HEK293 (cell line): ENCODE measurements at regions of chr17 and their contacts with region 1.

Region 1: GRCh38 chr17:41811549-41812380 is at the start of gene P3H4:
- H3K4me3 ChIP-seq: peak within 1 kb of the TSS; percentile 73
- H3K27ac ChIP-seq: peak within 1 kb of the TSS; percentile 89
- H3K4me1 ChIP-seq: 0 out of 2 replicates have a peak, but pooled peaks cover 8% of the 10 kb centered on the region
- CTCF ChIP-seq: peak; percentile 78

Region 2: DNA sequence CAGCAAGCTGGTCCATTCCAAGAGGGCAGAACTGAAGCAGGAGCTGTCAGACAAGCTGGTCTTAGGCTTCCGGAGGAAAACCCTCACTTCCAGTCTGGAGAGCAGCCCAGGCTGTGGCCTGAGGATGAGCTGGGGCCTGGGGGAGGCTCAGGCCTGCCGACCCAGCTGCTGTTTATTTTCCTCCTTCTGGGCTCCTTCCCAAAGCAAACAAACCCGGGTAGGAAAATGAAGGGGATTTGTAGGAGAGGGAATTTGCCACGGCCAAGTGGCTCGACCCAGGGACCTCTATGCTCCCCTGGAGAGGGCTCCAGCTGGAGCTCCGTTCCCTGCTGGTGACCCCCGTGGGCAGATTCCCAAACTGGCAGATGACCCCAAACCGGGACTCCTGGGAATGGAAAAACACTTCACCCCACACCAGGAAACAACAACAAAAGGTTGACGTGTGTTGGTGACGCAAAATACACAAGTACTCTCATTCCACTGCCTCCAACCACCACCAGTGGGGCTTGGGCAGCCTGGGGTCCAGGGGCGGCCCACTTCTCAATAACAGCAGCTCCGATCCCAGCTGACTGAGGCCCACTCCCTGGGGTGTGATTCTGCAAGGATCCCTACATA is 34.1 kb before region 1 on chr17:
- CTCF ChIA-PET with region 1: interaction called, 6 read pairs
- POLR2A ChIA-PET with region 1: interaction called, 12 read pairs
- H3K4me3 ChIP-seq: no peak overlapping the region
- H3K27ac ChIP-seq: peak overlapping the region; percentile 78
- H3K4me1 ChIP-seq: peaks cover 14% of the 10 kb centered on the region
- CTCF ChIP-seq: no peak

Region 3: DNA sequence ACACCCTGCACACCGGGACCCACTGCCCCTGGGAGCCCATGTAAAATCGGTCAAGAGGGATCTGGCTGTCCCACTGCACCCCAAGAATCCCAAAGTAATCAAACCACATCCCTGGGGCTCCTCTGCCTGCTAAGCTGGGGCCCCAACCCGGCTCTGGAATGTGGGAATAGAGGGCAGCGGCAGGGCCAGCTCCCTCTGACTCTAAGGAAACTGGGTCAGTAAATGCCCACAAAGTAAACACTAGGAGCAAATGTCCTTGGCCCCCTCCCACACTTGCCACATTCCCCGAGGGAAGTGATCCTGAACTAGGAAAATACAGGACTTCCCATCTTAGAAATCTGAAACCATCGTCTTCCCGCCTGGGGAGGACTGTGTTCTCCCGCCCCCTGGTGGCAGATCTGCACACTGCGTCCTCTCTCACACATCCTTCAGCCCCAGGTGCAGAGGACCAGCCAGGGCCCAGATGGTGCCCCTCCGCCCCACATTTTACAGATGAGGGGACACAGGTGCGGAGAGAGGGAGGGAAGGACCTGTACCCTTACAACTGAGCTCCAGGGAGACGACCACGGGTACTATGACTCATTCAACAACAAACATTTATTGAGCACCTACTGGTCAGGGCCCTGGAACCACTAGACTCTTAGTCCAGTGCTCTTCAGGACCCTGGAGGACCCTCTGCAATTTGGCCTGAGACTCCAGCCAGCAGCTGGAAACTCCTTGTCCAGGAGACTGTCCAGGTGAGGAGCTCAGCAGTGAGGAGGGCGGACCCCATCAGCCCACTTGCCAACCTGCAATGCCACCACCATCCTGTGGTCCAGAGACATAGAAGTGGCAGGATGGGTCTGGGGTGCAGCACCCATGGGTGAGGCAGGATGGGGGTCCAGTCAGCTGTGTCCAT is 10.1 kb before region 1 on chr17:
- CTCF ChIA-PET with region 1: interaction called, 45 read pairs
- POLR2A ChIA-PET with region 1: interaction called, 23 read pairs
- H3K4me3 ChIP-seq: peak overlapping the region; percentile 10; the same call in 1 of the 2 replicates
- H3K27ac ChIP-seq: no peak overlapping the region; the same call in 1 of the 2 replicates
- H3K4me1 ChIP-seq: peaks cover 6% of the 10 kb centered on the region
- CTCF ChIP-seq: peak; percentile 93

Region 4: DNA sequence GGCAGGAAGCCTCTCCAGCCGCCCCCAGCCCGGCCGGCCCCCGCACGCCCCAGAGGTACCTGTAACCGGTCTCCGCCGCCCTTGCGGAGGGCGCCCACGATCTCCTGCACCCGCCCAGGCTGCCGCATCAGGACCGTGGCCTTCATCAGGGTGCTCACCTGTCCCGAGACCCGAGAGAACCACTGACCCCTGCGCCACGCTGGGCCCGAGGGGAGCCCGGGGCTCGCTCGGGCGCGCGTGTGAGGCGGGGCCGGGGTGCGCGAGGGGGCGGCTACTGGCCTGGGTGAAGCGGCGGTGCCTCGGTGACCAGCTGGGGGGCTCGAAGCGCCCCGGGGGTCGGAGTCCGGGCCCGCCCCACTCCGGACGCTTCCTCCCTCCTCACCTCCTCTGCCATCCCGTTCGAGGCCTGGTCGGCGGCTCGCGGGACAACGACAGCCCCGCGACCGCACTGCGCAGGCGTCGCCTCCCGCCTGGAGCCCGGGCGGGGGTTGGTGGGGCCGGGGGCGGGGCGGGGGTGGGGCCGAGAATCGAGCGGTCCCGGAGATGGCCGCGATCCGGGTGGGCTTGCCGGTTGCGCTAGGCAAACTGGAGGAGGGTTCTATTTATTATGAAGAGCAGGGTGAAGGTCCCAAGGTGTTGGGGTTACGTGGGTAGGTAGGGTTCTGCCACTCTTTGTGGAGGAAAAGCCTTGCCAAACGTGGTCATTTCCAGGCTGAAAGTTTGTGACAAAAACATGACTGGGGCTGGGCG is 24.2 kb after region 1 on chr17 and contains the start of gene NT5C3B:
- CTCF ChIA-PET with region 1: interaction called, 4 read pairs
- POLR2A ChIA-PET with region 1: interaction called, 25 read pairs
- H3K4me3 ChIP-seq: peak within 1 kb of the TSS; percentile 95
- H3K27ac ChIP-seq: peak within 1 kb of the TSS; percentile 87
- H3K4me1 ChIP-seq: peaks cover 4% of the 10 kb centered on the region
- CTCF ChIP-seq: no peak

Region 5: GRCh38 chr17:41918314-41919164 is 106.8 kb after region 1 on chr17 and contains the start of gene ACLY:
- CTCF ChIA-PET with region 1: interaction called, 6 read pairs
- POLR2A ChIA-PET with region 1: interaction called, 10 read pairs
- H3K4me3 ChIP-seq: peak within 1 kb of the TSS; percentile 88
- H3K27ac ChIP-seq: peak within 1 kb of the TSS; percentile 91
- H3K4me1 ChIP-seq: peaks cover 21% of the 10 kb centered on the region
- CTCF ChIP-seq: no peak; the same call in 1 of the 2 replicates